Activated naive CD4-positive, alpha-beta T cell treated with anti-CD3 and anti-CD28 coated beads for 36 hours (primary cell): ENCODE measurements at regions of chr3 and their contacts with region 1.

Region 1: DNA sequence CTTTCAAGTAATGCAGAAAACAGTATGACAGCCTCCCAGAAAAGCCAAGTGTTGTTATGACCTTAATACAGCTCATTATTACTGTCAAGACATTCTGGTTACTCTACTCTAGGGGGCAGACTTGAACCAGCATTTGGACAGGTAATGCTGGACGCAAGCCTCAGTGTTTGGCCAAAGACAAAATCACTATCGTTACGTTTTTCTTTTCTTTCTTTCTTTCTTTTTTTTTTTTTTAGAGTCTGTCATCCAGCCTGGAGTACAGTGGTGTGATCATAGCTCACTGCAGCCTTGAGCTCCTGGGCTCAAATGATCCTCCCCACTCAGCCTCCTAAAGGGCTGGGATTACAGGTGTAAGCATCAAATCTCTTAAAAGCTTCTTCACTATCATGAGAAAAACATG is 29.4 kb upstream of the TMEM45A start:
- DNase-seq: peak; percentile 27
- H3K4me3 Mint-ChIP-seq: no peak overlapping the region
- H3K27ac Mint-ChIP-seq: no peak overlapping the region
- H3K4me1 Mint-ChIP-seq: peaks cover 5% of the 10 kb centered on the region
- H3K27me3 Mint-ChIP-seq: peaks cover 3% of the 10 kb centered on the region

Region 2: GRCh38 chr3:100634493-100635272 is 171.7 kb after region 1 on chr3:
- CTCF ChIA-PET with region 1: interaction called, 7 read pairs
- intact Hi-C with region 1: loop called (anchors 1 kb)
- DNase-seq: peak; percentile 59
- H3K4me3 Mint-ChIP-seq: no peak overlapping the region
- H3K27ac Mint-ChIP-seq: no peak overlapping the region
- H3K4me1 Mint-ChIP-seq: no peaks in the 10 kb centered on the region
- H3K27me3 Mint-ChIP-seq: peaks cover 7% of the 10 kb centered on the region

Region 3: GRCh38 chr3:100682056-100682853 is 219.3 kb after region 1 on chr3:
- CTCF ChIA-PET with region 1: no interaction called
- intact Hi-C with region 1: no loop called
- DNase-seq: no peak
- H3K4me3 Mint-ChIP-seq: no peak overlapping the region
- H3K27ac Mint-ChIP-seq: no peak overlapping the region
- H3K4me1 Mint-ChIP-seq: no peaks in the 10 kb centered on the region
- H3K27me3 Mint-ChIP-seq: no peaks in the 10 kb centered on the region